Upper lobe of right lung (tissue), 1 donor: ENCODE measurements at regions of chr16 and their contacts with region 1.

Region 1: GRCh38 chr16:28317040-28317880 is 24.9 kb downstream of the SBK1 start:
- DNase-seq: peak; percentile 80
- ATAC-seq: peak; percentile 79
- H3K4me3 ChIP-seq: no peak overlapping the region
- H3K27ac ChIP-seq: no peak overlapping the region
- H3K4me1 ChIP-seq: no peaks in the 10 kb centered on the region
- H3K27me3 ChIP-seq: no peaks in the 10 kb centered on the region
- CTCF ChIP-seq: peak; percentile 87

Region 2: DNA sequence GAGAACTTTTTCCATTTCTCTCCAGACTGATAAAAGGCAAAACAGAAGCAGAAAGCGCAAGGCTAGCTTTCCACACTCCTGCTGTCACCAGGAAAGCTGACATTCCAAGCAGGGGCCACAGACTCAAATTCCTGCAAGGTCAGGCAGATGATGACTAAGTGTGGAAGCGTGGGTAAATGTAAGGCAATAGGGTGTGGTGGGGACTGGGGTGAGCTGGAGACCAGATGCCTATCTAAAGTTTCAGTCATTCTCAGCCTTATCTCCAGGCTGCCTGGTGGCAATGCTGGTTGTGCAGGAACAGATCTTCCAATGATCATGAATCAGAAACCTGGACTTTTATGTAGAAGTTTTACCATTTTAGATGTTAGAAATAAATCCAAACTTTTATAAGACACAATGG is 477.8 kb before region 1 on chr16:
- intact Hi-C with region 1: no loop called
- DNase-seq: peak; percentile 3
- ATAC-seq: no peak
- H3K4me3 ChIP-seq: no peak overlapping the region
- H3K27ac ChIP-seq: no peak overlapping the region
- H3K4me1 ChIP-seq: no peaks in the 10 kb centered on the region
- H3K27me3 ChIP-seq: no peaks in the 10 kb centered on the region
- CTCF ChIP-seq: no peak

Region 3: GRCh38 chr16:27993587-27993986 is 323.7 kb before region 1 on chr16:
- intact Hi-C with region 1: no loop called
- DNase-seq: no peak
- ATAC-seq: no peak
- H3K4me3 ChIP-seq: no peak overlapping the region
- H3K27ac ChIP-seq: no peak overlapping the region
- H3K4me1 ChIP-seq: peaks cover 3% of the 10 kb centered on the region
- H3K27me3 ChIP-seq: no peaks in the 10 kb centered on the region
- CTCF ChIP-seq: no peak

Region 4: DNA sequence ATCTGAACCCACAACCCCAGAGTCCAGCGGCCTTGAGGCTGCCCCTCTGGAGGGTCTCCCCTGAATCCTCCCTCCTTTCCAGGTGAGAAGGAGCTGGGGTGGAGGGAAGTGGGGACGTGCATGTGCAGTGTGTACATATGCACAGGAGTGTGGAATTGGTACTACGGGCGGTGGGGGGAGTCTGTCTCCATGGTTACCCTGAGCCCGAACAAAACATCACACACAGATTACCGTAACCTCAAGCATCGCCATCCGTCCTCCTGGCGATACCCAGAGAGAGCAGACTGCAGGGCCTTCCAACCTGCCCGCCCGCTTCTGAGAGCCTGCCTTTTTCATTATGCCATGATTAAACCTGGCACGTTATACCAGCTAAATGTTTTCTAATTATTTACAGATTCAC is 278.9 kb before region 1 on chr16:
- intact Hi-C with region 1: no loop called
- DNase-seq: no peak
- ATAC-seq: no peak
- H3K4me3 ChIP-seq: no peak overlapping the region
- H3K27ac ChIP-seq: no peak overlapping the region
- H3K4me1 ChIP-seq: no peaks in the 10 kb centered on the region
- H3K27me3 ChIP-seq: no peaks in the 10 kb centered on the region
- CTCF ChIP-seq: no peak

Region 5: GRCh38 chr16:28130099-28131088 is 186.9 kb before region 1 on chr16:
- intact Hi-C with region 1: no loop called
- DNase-seq: no peak
- ATAC-seq: no peak
- H3K4me3 ChIP-seq: no peak overlapping the region
- H3K27ac ChIP-seq: peak overlapping the region; percentile 30
- H3K4me1 ChIP-seq: no peaks in the 10 kb centered on the region
- H3K27me3 ChIP-seq: no peaks in the 10 kb centered on the region
- CTCF ChIP-seq: no peak

Region 6: DNA sequence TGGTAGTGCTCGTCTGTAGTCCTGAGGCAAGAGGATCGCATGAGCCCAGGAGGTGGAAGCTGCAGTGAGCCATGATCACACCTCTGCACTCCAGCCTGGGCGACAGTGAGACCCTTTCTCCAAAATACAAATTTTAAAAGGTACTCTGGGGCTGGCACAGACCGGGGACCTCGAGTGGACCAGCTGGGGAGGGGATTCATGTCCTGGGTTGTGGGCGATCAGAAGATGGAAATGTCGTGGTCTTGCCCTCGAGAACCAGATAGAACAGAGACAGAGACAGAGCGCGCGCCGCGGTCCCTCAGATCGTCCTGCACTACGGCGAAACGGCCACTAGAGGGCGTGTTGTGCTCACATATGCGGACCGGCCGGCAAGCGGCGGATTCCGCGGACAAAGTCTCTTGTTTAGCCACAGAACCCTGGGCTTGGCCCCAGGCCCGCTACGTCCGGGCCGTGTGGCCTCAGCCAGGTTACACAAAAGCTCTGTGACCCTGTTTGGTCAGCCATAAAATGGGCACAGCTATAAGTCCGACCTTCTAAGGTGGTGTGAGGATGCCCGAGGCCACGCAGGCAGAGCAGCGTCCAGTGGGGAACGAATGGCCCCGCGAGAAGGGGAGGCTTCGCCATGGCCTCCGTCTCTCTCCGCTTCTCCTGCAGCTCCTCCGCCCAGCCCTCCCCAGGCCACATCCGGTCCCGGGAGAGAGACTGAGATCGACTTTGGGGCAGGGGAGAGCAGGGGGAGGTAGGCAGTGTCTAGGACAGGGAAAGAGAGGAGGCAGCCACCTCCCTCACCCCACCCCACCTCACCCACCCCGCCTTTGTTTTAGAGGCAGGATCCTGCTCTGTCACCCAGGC is 39.5 kb before region 1 on chr16:
- intact Hi-C with region 1: loop called (anchors 5 kb)
- DNase-seq: peak; percentile 91
- ATAC-seq: peak; percentile 97
- H3K4me3 ChIP-seq: peak overlapping the region; percentile 43
- H3K27ac ChIP-seq: no peak overlapping the region
- H3K4me1 ChIP-seq: peaks cover 9% of the 10 kb centered on the region
- H3K27me3 ChIP-seq: peaks cover 21% of the 10 kb centered on the region
- CTCF ChIP-seq: peak; percentile 98